MCF 10A (cell line): ENCODE measurements at regions of chr22 and their contacts with region 1.

Region 1: GRCh38 chr22:24175160-24175808 is 6.0 kb upstream of the SUSD2 start:
- DNase-seq: peak; percentile 79
- H3K4me3 Mint-ChIP-seq: no peak overlapping the region
- H3K27ac Mint-ChIP-seq: no peak overlapping the region
- H3K4me1 Mint-ChIP-seq: peaks cover 6% of the 10 kb centered on the region
- H3K27me3 Mint-ChIP-seq: no peaks in the 10 kb centered on the region
- CTCF ChIP-seq: peak; percentile 81

Region 2: DNA sequence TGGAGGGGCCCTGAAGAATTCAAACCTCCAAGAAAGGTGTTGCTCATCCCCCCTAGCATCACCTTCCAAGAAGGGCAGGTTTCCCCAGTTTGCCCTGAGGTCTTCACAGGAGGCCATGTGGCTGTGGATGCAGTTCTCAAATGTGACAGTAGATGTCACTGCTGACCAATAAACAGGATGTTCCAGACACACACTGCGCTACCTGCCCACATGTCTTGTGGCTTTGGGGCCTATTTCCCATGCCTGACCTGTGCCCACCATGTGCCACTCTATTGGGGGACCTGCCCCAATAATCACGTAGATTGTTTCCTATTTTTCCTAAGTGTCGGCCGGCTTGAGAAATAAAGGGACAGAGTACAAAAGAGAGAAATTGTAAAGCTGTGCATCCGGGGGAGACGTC is 190.9 kb before region 1 on chr22:
- CTCF ChIA-PET with region 1: no interaction called
- POLR2A ChIA-PET with region 1: no interaction called
- intact Hi-C with region 1: loop called (anchors 5 kb)
- DNase-seq: peak; percentile 65
- H3K4me3 Mint-ChIP-seq: no peak overlapping the region
- H3K27ac Mint-ChIP-seq: no peak overlapping the region
- H3K4me1 Mint-ChIP-seq: no peaks in the 10 kb centered on the region
- H3K27me3 Mint-ChIP-seq: no peaks in the 10 kb centered on the region
- CTCF ChIP-seq: peak; percentile 81

Region 3: DNA sequence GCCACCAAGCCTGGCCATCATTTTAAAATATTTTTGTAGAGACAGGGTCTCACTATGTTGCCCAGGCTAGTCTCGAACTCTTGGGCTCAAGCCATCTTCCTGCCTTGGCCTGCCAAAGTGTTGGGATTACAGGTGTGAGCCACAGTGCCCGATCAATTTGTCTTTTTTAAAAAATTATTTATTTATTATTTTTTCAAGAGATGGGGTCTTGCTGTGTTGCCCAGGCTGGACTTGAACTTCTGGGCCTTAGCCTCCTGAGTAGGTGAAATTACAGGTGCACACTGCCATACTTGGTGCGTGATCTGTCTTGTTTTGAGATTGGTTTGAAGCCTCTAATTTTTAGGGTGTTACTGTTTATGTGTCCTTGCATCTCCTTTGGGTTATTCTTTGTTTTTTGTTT is 154.0 kb before region 1 on chr22:
- CTCF ChIA-PET with region 1: no interaction called
- POLR2A ChIA-PET with region 1: no interaction called
- intact Hi-C with region 1: no loop called
- DNase-seq: no peak
- H3K4me3 Mint-ChIP-seq: no peak overlapping the region
- H3K27ac Mint-ChIP-seq: no peak overlapping the region
- H3K4me1 Mint-ChIP-seq: no peaks in the 10 kb centered on the region
- H3K27me3 Mint-ChIP-seq: no peaks in the 10 kb centered on the region
- CTCF ChIP-seq: no peak

Region 4: GRCh38 chr22:24106385-24107381 is 68.6 kb before region 1 on chr22:
- CTCF ChIA-PET with region 1: interaction called, 3 read pairs
- POLR2A ChIA-PET with region 1: no interaction called
- intact Hi-C with region 1: loop called (anchors 1 kb)
- DNase-seq: no peak
- H3K4me3 Mint-ChIP-seq: no peak overlapping the region
- H3K27ac Mint-ChIP-seq: peak overlapping the region; percentile 27
- H3K4me1 Mint-ChIP-seq: peaks cover 8% of the 10 kb centered on the region
- H3K27me3 Mint-ChIP-seq: no peaks in the 10 kb centered on the region
- CTCF ChIP-seq: peak; percentile 9

Region 5: DNA sequence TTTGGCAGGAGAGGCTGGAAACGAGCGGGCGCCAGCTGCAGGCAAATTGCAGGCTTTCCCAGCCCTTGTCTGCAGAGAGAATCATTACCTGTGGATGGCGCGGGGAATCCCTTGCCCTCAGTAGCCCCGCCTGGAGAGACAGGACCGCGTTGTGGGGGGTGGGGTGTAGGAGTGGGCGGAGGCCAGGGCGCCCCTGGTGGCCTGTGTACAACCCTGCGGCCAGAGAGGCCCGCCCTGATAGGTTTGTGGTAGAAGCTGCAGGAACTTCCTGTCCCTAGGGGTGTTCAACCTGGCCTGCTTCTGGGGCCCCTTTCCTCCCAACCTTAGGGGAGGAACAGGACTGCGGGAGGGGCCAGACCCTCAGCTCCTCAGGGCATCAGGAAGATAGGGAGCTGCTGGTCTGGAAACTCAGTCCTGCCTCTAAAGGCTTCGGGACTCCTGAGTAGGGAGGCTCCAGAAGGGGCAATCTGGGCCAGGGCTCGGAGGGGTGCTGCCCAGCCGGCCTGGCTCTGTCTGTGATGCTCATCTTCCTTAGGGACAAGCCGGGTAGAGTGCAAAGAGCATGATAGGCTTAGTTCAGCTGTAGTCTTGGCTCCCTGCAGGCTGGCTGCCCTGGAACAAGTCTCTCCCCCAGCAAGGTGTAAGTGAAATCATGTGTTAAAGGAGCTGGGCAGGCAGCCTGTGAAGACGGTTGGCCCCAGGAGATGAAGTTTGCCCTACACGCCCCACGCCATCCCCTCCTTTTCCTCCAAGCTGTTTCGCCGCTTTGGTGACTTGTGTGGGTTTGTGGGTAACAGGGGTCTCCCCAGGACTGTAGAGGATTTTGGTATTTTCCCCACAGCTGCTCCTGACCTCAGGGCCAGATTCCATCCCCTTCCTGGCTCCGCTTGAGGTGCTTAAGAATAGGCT is 18.1 kb before region 1 on chr22:
- CTCF ChIA-PET with region 1: interaction called, 35 read pairs
- POLR2A ChIA-PET with region 1: interaction called, 3 read pairs
- intact Hi-C with region 1: no loop called
- DNase-seq: peak; percentile 85
- H3K4me3 Mint-ChIP-seq: peak overlapping the region; percentile 70
- H3K27ac Mint-ChIP-seq: no peak overlapping the region
- H3K4me1 Mint-ChIP-seq: peaks cover 13% of the 10 kb centered on the region
- H3K27me3 Mint-ChIP-seq: no peaks in the 10 kb centered on the region
- CTCF ChIP-seq: peak; percentile 89

Region 6: DNA sequence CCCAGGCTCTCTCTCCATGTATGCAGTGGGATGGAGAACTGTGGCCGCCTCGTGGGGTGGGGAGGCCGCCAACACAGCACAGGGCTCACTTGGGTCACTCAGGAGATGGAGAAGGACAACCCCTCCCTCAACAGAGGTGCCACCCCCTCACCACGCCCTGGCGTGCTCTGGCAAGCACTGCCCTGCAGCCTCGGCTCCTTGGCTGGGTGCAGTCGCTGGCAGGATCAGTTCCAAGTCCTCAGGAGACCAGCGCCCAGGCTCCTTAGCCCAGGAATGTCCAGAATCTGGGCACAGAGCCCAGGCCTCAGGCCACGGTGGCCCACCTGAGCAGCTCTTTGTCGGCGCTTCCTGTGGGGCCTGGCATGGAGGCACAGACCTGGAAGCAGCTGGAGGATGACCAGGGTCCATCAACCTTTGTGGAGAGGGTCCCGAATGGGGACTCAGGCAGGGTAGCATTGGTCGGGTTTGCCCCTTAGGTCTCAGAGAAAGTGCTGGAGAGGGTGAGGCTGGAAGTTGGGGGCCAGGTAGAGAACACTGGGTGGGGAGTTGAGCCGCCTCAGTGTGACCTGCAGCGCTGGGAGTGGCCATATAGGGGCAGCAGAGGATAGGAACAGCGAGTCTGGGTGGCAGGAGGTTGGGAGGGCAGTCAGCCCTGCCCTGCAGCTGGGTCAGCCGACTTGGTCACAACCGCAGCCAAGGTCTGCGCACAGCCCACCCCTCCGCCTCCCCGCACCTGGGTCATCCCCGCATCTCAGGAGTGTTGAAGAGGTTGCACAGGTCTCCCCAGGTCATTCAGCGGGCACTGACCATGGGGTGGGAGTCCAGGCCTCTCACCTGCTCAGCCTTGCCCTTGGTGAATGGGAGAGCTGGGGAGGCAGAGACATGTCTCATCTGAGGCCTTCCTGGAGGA is 14.2 kb after region 1 on chr22:
- CTCF ChIA-PET with region 1: interaction called, 23 read pairs
- POLR2A ChIA-PET with region 1: no interaction called
- intact Hi-C with region 1: no loop called
- DNase-seq: peak; percentile 88
- H3K4me3 Mint-ChIP-seq: peak overlapping the region; percentile 56
- H3K27ac Mint-ChIP-seq: peak overlapping the region; percentile 82
- H3K4me1 Mint-ChIP-seq: peaks cover 32% of the 10 kb centered on the region
- H3K27me3 Mint-ChIP-seq: no peaks in the 10 kb centered on the region
- CTCF ChIP-seq: peak; percentile 93